ENCODE measurements at regions of chrX and their contacts with region 1.

Region 1: GRCh38 chrX:19799319-19800182 is 87.8 kb downstream of the SH3KBP1 start:
- DNase-seq: no peak
- ATAC-seq: peak; percentile 71
- H3K4me3 Mint-ChIP-seq: peak overlapping the region; percentile 95
- H3K27ac Mint-ChIP-seq: peak overlapping the region; percentile 97
- H3K4me1 Mint-ChIP-seq: peaks cover 55% of the 10 kb centered on the region
- H3K27me3 Mint-ChIP-seq: no peaks in the 10 kb centered on the region

Region 2: DNA sequence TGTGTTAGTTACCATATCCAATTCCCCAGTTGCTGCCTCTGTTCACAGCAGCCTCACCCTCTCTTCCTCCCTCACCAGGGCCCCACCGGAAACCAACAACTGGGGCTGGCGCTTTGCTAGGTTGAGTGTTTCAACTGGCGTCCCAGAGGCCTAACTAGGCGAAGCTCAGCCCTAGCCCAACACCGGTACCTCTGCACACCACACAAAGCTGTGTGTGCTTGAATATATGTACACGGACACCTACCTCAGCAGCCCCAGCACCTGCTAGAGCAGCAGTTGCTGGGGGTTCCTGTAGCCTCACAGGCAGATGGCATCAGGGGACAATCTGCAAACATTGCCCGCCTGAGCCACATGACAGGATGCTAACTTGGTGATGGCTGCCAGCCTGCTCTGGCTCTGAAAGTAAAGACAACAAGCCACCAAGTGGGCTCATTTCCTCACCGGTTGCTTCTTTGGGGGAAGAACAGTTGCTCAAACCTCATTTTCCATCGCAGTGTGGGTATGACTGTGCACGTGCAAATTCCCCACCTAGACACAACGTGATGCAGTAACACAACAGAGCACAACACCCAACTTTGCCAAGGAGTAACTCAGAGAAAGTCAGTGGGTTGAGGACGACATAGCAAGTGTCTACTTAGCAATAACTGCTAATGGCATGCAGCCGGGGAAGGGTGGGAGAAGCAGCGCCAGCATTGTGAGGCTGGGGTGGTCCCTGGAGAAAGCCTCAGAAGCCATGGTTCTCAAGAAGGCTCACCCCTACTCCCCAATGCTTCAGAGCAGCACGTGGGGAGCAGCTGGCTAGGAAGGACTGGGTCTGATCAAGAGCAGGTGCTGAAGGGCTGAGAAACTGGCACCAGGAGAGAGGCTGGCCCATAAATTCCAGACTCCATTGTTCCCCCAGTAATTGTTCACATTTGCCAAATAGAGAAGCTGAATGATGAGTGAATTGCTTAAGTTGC is 51.6 kb before region 1 on chrX:
- POLR2A ChIA-PET with region 1: interaction called, 22 read pairs
- DNase-seq: peak; percentile 70
- ATAC-seq: peak; percentile 89
- H3K4me3 Mint-ChIP-seq: peak overlapping the region; percentile 74
- H3K27ac Mint-ChIP-seq: peak overlapping the region; percentile 99
- H3K4me1 Mint-ChIP-seq: peaks cover 76% of the 10 kb centered on the region
- H3K27me3 Mint-ChIP-seq: no peaks in the 10 kb centered on the region

Region 3: DNA sequence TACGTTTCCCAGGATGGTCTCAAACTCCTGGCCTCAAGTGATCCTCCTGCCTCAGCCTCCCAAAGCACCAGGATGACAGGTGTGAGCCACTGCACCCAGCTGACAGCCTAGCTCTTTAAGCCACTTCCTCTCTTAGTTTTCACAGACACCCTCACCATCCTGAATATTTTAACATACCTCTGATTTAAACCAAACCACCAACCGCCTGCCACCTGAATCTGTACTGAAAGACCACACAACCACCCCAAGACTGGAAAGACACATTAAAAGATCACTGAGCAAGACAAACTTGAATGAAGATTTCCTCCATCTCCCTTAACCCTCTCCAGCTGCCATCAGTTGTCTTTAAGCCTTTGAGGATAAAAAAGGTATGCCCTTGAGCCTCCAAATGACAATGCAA is 22.8 kb before region 1 on chrX:
- POLR2A ChIA-PET with region 1: interaction called, 12 read pairs
- DNase-seq: no peak
- ATAC-seq: peak; percentile 73
- H3K4me3 Mint-ChIP-seq: peak overlapping the region; percentile 41
- H3K27ac Mint-ChIP-seq: peak overlapping the region; percentile 85
- H3K4me1 Mint-ChIP-seq: peaks cover 52% of the 10 kb centered on the region
- H3K27me3 Mint-ChIP-seq: no peaks in the 10 kb centered on the region

Region 4: DNA sequence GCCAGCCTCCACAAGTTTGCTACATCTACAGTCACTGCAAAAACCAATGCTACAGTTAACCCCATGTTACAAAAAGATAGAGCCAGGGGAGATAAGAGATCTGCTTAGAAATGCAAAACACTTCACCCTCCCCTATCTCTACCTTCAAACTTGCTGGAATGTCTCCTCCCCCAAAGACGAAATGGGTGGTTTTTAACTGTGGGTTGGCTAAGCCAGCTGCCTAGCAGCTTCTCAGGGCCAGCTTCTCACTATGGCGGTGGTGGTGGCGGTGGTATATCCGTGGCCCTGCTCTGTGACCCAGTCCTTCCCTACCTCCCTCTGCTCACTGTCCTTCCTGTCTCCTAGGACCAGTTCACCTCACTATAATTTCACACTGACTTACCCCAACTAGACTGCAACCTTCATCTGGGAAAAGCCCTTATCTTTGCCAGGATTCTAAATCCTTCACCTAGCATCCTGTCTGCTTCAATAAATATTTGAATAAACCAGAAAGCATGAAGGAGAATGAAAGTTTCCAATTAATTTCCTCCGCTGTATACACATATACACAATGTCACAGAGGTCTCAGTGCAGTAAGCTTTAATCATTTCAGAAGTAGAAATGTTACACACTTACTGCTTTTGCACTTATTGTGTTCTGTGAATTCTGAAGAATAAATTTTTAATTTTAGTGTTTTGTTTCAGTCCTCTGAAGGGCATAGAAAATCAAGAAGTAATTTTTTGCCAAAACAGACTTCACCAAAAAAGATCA is 41.5 kb after region 1 on chrX:
- POLR2A ChIA-PET with region 1: interaction called, 10 read pairs
- DNase-seq: peak; percentile 50
- ATAC-seq: peak; percentile 72
- H3K4me3 Mint-ChIP-seq: peak overlapping the region; percentile 82
- H3K27ac Mint-ChIP-seq: peak overlapping the region; percentile 97
- H3K4me1 Mint-ChIP-seq: peaks cover 38% of the 10 kb centered on the region
- H3K27me3 Mint-ChIP-seq: no peaks in the 10 kb centered on the region

Measured in activated naive CD8-positive, alpha-beta T cell treated with anti-CD3 and anti-CD28 coated beads, Interleukin-2, amount 10 ng/mL, durations not matched to agents 7 days and 5 days (primary cell).